Endothelial cell of umbilical vein (primary cell): ENCODE measurements at regions of chr17 and their contacts with region 1.

Region 1: DNA sequence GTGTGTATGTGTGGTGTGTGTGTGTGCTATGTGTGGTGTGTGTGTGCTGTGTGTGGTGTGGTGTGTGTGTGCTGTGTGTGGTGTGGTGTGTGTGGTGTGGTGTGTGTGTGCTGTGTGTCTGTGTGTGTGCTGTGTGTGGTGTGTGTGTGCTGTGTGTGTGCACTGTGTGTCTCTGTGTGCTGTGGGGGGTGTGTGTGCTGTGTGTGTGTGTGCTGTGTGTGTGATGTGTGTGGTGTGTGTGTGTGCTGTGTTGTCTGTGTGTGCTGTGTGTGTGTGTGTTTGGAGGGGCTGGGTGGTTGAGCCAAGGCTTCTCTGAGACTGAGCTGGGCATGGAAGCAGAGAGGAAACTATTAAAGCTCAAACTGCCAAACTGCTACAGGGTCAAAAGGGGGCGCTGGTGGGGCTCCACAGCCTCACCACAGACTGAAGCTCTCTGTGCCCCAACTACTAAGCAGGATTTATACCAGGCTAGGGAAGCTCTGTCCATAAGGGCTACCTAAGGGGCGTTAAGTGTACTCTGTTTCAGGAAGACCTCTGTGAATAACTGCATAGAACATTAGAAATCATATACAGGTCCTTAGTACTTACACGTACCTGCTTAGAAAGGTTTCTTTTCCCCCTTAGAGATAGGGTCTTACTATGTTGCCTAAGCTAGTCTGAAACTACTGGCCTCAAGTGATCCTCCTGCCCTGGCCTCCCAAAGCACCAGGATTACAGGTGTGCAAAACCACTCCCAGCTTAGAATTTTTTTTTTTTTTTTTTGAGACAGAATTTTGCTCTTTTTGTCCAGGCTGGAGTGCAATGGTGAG is 27.8 kb upstream of the GHDC start:
- DNase-seq: peak; percentile 77
- H3K4me3 ChIP-seq: no peak overlapping the region
- H3K27ac ChIP-seq: no peak overlapping the region
- H3K4me1 ChIP-seq: peaks cover 1% of the 10 kb centered on the region
- H3K27me3 ChIP-seq: no peaks in the 10 kb centered on the region
- CTCF ChIP-seq: peak; percentile 78 to 86
- POLR2A ChIP-seq: no peak

Region 2: GRCh38 chr17:42067351-42068091 is 154.6 kb before region 1 on chr17:
- CTCF ChIA-PET with region 1: no interaction called
- POLR2A ChIA-PET with region 1: no interaction called
- dilution Hi-C with region 1: no loop called
- intact Hi-C with region 1: no loop called
- DNase-seq: peak; percentile 57
- H3K4me3 ChIP-seq: no peak overlapping the region
- H3K27ac ChIP-seq: no peak overlapping the region
- H3K4me1 ChIP-seq: peaks cover 3% of the 10 kb centered on the region
- H3K27me3 ChIP-seq: peaks cover 0 to 9% of the 10 kb centered on the region in 2 experiments
- CTCF ChIP-seq: peak; percentile 76 to 89
- POLR2A ChIP-seq: no peak

Region 3: GRCh38 chr17:42183741-42184711 is 38.1 kb before region 1 on chr17:
- CTCF ChIA-PET with region 1: interaction called, 10 read pairs
- POLR2A ChIA-PET with region 1: no interaction called
- dilution Hi-C with region 1: no loop called
- intact Hi-C with region 1: no loop called
- DNase-seq: peak; percentile 70
- H3K4me3 ChIP-seq: peak overlapping the region; percentile 35 to 51 (median 45)
- H3K27ac ChIP-seq: peak overlapping the region; percentile 16
- H3K4me1 ChIP-seq: peaks cover 14% of the 10 kb centered on the region
- H3K27me3 ChIP-seq: peaks cover 9 to 13% of the 10 kb centered on the region in 2 experiments
- CTCF ChIP-seq: peak; percentile 86 to 99
- POLR2A ChIP-seq: peak; percentile 38

Region 4: GRCh38 chr17:42233941-42234340 is 11.8 kb after region 1 on chr17:
- CTCF ChIA-PET with region 1: interaction called, 15 read pairs
- POLR2A ChIA-PET with region 1: no interaction called
- dilution Hi-C with region 1: no loop called
- intact Hi-C with region 1: no loop called
- DNase-seq: no peak
- H3K4me3 ChIP-seq: no peak overlapping the region
- H3K27ac ChIP-seq: no peak overlapping the region
- H3K4me1 ChIP-seq: no peaks in the 10 kb centered on the region
- H3K27me3 ChIP-seq: no peaks in the 10 kb centered on the region
- CTCF ChIP-seq: no peak
- POLR2A ChIP-seq: no peak

Region 5: DNA sequence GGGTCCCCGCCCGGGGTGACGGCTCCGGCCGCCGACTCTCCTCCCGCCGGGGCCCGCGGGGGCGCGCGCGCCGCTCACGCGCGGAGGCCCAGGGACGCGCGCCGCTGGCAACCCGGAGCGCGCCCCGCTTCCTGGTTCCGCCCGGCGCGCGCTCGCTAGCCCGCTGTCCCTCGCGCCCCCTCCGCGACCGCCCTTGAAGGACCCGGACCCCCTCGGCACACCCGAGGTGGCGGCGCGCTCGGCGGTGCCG is 54.1 kb after region 1 on chr17 and contains the start of gene STAT5B:
- CTCF ChIA-PET with region 1: interaction called, 35 read pairs
- POLR2A ChIA-PET with region 1: no interaction called
- dilution Hi-C with region 1: no loop called
- intact Hi-C with region 1: loop called (anchors 1 kb)
- DNase-seq: peak; percentile 46
- H3K4me3 ChIP-seq: peak within 1 kb of the TSS; percentile 65 to 96 (median 79)
- H3K27ac ChIP-seq: peak within 1 kb of the TSS; percentile 59
- H3K4me1 ChIP-seq: peaks cover 16% of the 10 kb centered on the region
- H3K27me3 ChIP-seq: no peaks in the 10 kb centered on the region
- CTCF ChIP-seq: no peak
- POLR2A ChIP-seq: no peak
- total RNA-seq, gene STAT5B: 53.1 and 53.7 TPM in 2 replicates

Region 6: DNA sequence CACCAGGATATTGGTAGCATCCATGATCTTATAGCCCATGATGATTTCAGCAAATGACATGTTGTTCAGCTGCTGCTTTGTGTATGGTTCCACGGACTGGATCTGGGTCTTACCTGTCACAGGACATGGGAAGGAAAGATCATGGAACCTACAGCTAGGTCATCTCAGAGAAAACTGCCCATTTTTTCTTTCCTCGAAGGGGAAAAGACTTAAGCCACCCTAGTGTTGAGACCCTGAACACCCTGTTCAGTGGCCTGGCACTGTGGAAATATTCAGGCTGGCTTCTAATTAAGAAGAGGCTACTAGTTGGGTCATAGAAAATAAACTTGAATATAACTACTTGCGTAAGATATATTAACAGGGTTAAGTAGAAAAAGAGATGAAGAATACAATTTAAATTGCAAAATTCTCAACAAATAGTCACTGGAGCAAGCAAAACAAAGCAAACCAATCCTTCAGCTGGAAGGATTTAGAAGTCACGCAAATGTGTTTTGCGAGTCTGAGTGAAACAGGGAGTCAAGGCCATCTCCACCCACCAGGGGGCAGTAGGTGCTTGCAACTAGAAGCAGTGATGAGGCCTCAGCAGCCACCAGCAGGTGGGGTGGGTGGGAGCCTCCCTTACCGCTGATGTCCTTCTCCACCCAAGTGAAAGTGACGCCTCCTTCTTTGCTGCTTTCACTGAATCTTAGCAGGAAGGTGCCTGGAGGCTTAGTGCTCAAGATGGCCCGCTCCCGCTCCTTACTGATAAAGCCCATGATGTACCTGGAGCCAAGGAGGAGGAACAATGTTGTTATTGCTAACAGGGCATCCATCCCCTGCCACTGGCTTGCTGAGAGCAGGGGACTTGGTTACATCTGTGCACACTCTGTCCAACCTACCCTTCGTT is 100.5 kb after region 1 on chr17:
- CTCF ChIA-PET with region 1: interaction called, 14 read pairs
- POLR2A ChIA-PET with region 1: no interaction called
- dilution Hi-C with region 1: no loop called
- intact Hi-C with region 1: no loop called
- DNase-seq: peak; percentile 92
- H3K4me3 ChIP-seq: no peak overlapping the region
- H3K27ac ChIP-seq: peak overlapping the region; percentile 97
- H3K4me1 ChIP-seq: peaks cover 35% of the 10 kb centered on the region
- H3K27me3 ChIP-seq: no peaks in the 10 kb centered on the region
- CTCF ChIP-seq: peak; percentile 97 to 99
- POLR2A ChIP-seq: no peak

Region 7: DNA sequence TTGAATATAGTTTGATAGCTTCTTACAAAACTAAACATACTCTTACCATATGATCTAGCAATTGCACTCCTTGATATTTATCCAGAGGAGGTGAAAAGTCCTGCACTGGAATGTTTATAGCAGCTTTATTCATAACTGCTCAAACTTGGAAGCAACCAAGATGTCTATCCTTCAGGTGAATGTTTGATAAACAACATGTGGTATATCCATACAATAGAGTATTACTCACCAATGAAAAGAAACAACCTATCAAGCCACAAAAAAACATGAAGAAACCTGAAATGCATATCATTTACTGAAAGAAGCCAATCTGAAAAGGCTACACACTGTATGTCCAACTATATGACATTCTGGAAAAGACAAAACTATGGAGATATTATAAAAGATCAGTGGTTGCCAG is 150.0 kb after region 1 on chr17:
- CTCF ChIA-PET with region 1: no interaction called
- POLR2A ChIA-PET with region 1: no interaction called
- dilution Hi-C with region 1: no loop called
- intact Hi-C with region 1: no loop called
- DNase-seq: no peak
- H3K4me3 ChIP-seq: no peak overlapping the region
- H3K27ac ChIP-seq: no peak overlapping the region
- H3K4me1 ChIP-seq: no peaks in the 10 kb centered on the region
- H3K27me3 ChIP-seq: no peaks in the 10 kb centered on the region
- CTCF ChIP-seq: no peak
- POLR2A ChIP-seq: no peak

Region 8: DNA sequence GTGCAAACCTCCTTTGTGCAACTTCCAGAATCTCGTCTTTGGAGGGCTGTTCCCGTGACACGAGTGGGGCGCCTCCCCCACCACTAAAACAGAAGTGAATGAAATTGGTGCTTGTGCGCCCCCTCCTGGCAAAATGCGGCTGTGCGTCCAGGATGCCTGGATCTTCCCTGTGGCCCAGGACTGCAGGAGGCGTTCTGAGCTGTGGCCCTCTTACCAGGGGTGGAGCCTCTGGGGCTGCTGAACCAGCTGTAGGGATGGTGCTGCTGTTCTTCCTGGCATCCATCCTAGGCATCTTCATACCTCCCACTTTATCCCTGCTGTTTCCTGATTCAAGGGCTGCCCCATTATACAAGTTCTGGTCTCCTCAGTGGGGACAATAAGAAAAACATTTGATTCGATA is 295.4 kb after region 1 on chr17:
- CTCF ChIA-PET with region 1: interaction called, 39 read pairs
- POLR2A ChIA-PET with region 1: no interaction called
- dilution Hi-C with region 1: no loop called
- intact Hi-C with region 1: no loop called
- DNase-seq: peak; percentile 90
- H3K4me3 ChIP-seq: no peak overlapping the region
- H3K27ac ChIP-seq: peak overlapping the region; percentile 100
- H3K4me1 ChIP-seq: peaks cover 51% of the 10 kb centered on the region
- H3K27me3 ChIP-seq: no peaks in the 10 kb centered on the region
- CTCF ChIP-seq: peak; percentile 92 to 98
- POLR2A ChIP-seq: peak; percentile 54